AG04449 (cell line): ENCODE measurements at regions of chr17 and their contacts with region 1.

Region 1: GRCh38 chr17:75845049-75845860 is 1.1 kb upstream of the UNC13D start:
- DNase-seq: no peak
- H3K4me3 ChIP-seq: no peak overlapping the region
- CTCF ChIP-seq: peak; percentile 74

Region 2: DNA sequence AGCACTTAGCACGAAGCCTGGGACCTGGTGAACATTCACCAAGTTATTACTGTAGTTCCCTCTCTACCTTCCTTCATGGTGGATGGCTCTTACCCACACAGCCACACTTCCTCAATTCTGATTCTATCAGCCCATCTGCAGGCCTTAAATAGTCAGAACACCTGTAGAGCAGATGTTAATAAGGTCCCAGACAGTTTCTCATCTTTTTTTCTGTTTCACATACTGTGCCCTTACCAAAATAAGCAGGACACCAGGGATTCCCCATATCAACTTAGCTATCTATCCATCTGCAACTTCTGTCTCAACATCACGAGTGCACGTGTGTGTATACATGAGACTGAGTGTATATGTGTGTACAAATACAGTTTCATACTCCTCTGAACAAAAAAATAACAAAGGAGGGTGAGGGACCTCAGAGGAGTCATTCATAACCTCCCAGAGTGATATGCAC is 181.1 kb before region 1 on chr17:
- CTCF ChIA-PET with region 1: no interaction called
- POLR2A ChIA-PET with region 1: no interaction called
- DNase-seq: no peak
- H3K4me3 ChIP-seq: no peak overlapping the region
- CTCF ChIP-seq: no peak

Region 3: GRCh38 chr17:75679706-75680442 is 165.4 kb before region 1 on chr17:
- CTCF ChIA-PET with region 1: no interaction called
- POLR2A ChIA-PET with region 1: no interaction called
- DNase-seq: no peak
- H3K4me3 ChIP-seq: no peak overlapping the region
- CTCF ChIP-seq: no peak

Region 4: DNA sequence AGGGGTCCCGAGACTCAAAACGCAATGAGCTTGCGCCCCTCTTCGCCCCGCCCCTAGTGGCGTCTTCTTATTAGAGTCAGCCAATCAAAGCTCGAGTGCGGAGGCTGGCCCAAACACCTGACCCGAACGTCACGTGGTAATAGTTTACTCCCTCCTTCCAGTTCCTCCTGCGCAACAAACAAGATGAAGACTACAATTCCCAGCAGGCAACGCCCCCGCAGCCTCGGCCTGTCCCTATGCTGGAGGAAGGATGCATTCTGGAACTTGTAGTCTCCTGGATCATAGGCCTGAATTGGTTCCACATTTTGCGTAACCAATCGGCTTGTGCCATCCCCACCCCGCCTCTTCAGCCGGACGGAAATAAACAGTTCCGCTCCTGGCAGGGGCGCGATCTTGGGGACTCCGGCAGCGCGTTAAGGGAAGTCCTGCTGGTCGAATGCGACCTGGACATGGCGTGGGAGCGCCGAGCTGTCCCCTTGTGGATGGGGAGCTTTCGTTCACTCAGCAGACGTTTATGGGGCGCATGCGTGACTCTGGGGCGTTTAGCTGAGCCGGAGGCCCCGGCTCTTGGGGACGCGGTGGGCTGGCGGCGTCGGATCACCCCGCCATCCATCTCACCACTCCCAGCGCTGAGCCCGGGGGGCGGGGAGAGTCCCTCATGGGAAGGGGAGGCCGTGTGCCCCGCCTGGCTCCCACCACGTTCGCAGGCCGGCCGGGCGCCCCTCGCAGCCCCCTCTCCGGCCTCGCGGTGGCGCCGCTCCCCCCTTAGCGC is 10.2 kb after region 1 on chr17 and contains the start of gene WBP2:
- CTCF ChIA-PET with region 1: interaction called, 52 read pairs
- POLR2A ChIA-PET with region 1: no interaction called
- DNase-seq: peak; percentile 99
- H3K4me3 ChIP-seq: peak within 1 kb of the TSS; percentile 97
- CTCF ChIP-seq: peak; percentile 57

Region 5: DNA sequence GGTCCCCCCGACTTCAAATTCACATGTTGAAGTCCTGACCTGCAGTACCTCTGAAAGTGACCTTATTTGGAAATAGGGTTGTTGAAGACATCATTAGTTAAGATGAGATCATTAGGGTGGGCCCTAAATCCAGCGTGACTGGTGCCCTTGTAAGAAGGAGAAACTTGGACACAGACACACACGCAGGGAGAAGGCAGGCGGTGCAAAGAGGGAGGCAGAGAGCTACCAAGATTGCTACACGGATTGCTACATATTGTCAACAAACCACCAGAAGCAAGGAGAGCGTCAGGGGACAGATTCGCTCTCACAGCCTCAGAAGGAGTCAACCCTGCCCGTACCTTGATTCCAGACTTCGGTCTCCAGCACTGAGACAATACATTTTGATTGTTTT is 16.7 kb after region 1 on chr17:
- CTCF ChIA-PET with region 1: interaction called, 17 read pairs
- POLR2A ChIA-PET with region 1: no interaction called
- DNase-seq: no peak
- H3K4me3 ChIP-seq: no peak overlapping the region
- CTCF ChIP-seq: no peak

Region 6: DNA sequence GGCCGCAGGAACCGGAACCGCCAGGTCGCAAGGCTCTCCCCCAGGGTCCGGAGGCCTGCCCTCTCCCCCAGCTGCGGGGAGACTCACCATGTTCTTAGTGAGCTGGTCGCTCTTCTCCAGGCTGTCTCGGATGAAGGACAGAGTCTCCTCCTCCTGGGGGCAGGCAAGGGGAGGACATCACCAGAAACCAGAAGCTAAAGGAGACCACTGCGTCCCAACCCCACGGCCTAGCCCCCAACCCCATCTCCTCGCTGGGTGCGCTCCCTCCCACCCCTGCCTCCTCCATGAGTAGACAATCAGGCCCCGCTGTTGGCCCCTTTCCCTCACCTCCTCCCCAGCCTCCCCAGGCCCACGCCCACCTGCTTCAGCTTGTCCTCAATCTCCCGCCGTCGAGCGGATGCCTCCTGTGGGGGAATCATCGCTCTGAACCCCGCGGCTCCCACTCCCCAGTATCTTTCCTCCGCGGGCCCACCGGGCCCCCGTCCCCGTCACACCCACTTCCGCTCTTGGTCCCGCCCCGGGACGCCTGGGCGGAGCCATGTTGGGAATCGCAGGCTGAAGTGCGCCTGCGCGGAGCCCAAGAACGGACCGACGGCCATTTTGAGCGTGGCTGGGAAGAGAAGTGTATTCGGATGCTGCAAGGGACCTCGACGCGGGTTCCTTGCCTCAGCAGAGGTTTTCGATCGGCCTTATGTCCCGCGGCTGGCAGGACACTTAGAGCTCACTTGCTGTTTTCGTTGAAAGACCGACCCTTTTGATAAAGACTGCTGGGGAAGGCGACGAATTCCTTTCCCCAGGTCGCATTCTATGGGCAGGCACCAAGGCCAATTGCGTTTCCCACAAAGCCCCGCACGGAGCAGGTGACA is 258.3 kb after region 1 on chr17 and contains the start of gene EXOC7:
- CTCF ChIA-PET with region 1: no interaction called
- POLR2A ChIA-PET with region 1: no interaction called
- DNase-seq: peak; percentile 16
- H3K4me3 ChIP-seq: peak within 1 kb of the TSS; percentile 92
- CTCF ChIP-seq: peak; percentile 10